Motor neuron (in vitro differentiated cells): ENCODE measurements at regions of chr17 and their contacts with region 1.

Region 1: GRCh38 chr17:59435238-59435637 is 103.8 kb downstream of the YPEL2 start:
- ATAC-seq: peak in 6 of 8 experiments; percentile 21 to 91 (median 57)
- H3K4me3 ChIP-seq: no peak overlapping the region
- H3K27ac ChIP-seq: no peak overlapping the region
- H3K4me1 ChIP-seq: peaks cover 3 to 5% of the 10 kb centered on the region in 2 donors

Region 2: GRCh38 chr17:59329638-59330313 is 105.5 kb before region 1 on chr17:
- in situ Hi-C with region 1: loop called in 7 of 9 experiments (anchors 10 to 25 kb)
- ATAC-seq: peak in 4 of 8 experiments; percentile 14 to 33 (median 21)
- H3K4me3 ChIP-seq: no peak overlapping the region
- H3K27ac ChIP-seq: no peak overlapping the region
- H3K4me1 ChIP-seq: peaks cover 12 to 22% of the 10 kb centered on the region in 2 donors

Region 3: DNA sequence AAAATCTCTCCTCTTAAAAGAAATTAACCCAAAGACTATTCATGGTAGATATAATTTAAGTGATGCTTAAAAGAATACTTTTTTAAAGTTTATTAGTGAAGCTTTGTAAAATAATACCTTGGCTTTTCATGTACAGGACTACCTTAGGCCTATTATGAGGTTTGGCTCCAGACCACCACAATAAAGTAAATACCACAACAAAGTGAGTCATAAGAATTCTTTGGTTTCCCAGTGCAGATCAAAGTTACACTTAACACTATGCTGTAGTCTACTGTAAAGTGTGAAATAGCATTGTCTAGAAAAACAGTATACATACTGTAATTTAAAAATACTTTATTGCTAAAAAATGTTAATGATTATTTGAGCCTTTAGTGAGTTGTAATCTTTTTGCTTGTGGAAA is 216.1 kb after region 1 on chr17:
- in situ Hi-C with region 1: no loop called
- ATAC-seq: no peak
- H3K4me3 ChIP-seq: no peak overlapping the region
- H3K27ac ChIP-seq: no peak overlapping the region
- H3K4me1 ChIP-seq: no peaks in the 10 kb centered on the region

Region 4: DNA sequence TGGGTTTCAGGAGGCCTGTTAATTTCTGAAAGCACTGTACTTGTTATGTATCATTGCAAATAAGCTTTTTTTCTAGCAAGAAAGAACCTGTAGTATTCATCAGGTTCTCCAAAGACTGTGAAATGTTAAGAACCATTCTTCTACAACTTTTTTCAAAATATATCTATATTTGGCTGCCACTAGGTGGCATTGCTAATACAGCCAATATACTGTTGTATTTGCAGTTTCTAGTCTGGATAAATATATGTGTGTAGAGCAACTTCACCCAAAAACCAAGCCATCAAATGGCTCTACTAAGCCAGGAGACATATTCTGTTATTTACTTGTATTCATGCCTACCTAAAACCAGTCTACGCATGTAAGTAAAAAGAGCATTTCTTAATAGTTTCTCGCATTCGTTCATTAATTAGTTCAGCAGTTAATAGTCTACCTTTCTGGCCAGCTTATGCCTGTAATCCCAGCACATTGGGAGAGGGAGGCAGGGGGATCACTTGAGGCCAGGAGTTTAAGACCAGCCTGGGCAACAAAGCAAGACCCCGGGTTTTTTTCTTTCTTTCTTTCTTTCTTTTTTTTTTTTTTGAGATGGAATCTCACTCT is 311.7 kb after region 1 on chr17:
- in situ Hi-C with region 1: no loop called
- ATAC-seq: peak in 4 of 8 experiments; percentile 22 to 67 (median 56)
- H3K4me3 ChIP-seq: no peak overlapping the region
- H3K27ac ChIP-seq: no peak overlapping the region
- H3K4me1 ChIP-seq: no peaks in the 10 kb centered on the region